ENCODE measurements at regions of chrX and their contacts with region 1.

Region 1: DNA sequence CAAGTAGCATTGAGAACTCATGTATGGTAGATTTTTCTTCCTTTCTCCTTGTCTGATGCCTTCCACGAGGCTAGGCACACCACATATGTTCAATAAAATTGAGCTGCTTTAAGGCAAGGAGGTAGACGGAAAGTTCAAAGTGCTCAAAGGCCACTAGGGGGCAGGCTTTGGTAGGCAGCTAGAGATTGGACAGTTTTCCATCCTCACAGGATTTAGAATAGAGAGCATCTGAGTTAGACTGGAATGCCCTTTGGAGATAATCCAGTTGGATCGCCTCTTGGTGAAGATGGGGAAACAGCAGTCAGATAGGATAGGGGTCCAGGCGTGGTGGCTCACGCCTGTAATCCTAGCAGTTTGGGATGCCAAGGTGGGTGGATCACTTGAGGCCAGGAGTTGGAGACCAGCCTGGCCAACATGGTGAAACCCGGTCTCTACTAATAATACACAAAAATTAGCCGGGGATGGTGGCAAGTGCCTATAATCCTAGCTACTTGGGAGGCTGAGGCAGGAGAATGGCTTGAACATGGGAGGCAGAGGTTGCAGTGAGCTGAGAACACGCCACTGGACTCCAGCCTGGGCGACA is 30.4 kb downstream of the ELF4 start:
- DNase-seq: peak; percentile 74
- H3K4me3 Mint-ChIP-seq: no peak overlapping the region
- H3K27ac Mint-ChIP-seq: peak overlapping the region; percentile 4
- H3K4me1 Mint-ChIP-seq: peaks cover 41% of the 10 kb centered on the region
- H3K27me3 Mint-ChIP-seq: no peaks in the 10 kb centered on the region

Region 2: GRCh38 chrX:129781134-129781672 is 298.7 kb before region 1 on chrX:
- CTCF ChIA-PET with region 1: no interaction called
- intact Hi-C with region 1: loop called (anchors 1 kb)
- DNase-seq: peak; percentile 91
- H3K4me3 Mint-ChIP-seq: peak overlapping the region; percentile 82
- H3K27ac Mint-ChIP-seq: peak overlapping the region; percentile 97
- H3K4me1 Mint-ChIP-seq: peaks cover 53% of the 10 kb centered on the region
- H3K27me3 Mint-ChIP-seq: no peaks in the 10 kb centered on the region

Region 3: DNA sequence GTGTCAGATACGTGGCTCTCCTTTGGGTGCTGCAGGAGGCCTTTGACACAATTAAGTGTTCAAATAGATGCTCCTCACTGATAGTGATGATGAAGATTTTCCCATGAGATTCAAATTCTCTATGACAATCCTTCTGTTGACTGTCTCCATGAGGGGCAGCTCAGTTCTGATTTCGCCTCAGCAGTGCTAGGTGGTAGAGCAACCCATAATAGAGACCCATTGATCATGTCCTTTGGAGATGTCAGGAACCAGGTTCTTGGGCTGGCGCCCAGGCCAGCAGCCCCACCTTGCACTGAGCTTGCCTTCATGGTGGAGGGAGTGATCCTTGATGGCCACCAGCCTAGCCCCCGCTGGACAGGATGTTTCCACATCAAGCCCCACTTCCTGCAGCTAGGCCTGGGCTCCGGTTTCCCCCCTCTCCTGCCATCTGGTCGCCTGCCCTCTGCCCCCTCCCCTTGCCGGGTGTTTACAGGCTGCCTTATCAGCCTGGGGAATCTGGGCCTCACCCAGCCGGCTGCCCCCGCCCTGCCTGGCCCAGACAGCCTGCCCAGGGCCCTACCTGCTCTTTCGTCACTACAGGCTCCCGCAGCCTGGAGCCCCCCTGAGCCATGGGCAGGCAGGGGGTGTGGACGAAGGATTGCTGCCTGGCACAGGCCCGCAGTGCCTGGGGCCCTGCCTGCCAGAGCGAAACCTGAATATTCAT is 17.7 kb after region 1 on chrX:
- CTCF ChIA-PET with region 1: interaction called, 12 read pairs
- intact Hi-C with region 1: loop called (anchors 1 kb)
- DNase-seq: peak; percentile 11
- H3K4me3 Mint-ChIP-seq: no peak overlapping the region
- H3K27ac Mint-ChIP-seq: peak overlapping the region; percentile 54
- H3K4me1 Mint-ChIP-seq: peaks cover 66% of the 10 kb centered on the region
- H3K27me3 Mint-ChIP-seq: no peaks in the 10 kb centered on the region

Region 4: DNA sequence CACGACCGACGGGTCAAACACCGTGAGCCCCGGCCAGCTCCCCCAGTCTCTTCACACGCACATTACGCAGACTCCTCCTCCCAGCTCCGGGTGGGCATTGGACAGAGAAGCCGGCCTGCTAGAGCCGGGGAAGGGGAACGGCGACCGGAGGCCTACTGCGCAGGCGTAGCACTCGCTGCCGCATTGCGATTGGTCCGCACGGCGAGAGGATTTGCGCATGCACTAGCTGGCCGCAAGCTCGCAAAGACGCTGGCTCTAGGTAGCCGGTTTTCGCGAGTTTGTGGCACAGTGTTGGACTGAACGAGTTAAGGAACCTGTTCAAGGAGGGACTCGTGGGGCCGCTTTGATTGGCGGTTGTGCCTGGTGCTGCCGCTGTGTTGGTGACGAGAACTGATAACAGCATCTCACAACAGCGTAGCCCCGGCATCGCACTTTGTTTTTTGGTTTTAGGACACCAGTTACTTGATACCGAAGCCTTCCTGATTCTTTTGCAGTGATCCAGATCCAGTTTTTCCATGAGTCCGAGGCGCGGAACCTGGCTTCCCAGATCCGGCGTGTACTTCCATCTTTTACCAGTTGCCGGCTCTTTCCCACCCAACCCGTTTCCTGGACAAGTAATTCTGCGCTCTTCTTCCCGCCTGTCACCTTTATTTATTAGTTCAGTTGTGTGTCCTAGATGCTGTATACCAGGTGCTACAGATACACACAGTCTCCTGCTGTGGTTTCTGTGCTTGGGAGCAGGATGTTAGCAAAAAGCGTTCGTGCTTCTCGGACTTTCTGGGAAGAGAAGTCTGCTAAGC is 86.0 kb after region 1 on chrX and contains the start of gene AIFM1:
- CTCF ChIA-PET with region 1: interaction called, 4 read pairs
- intact Hi-C with region 1: loop called (anchors 1 kb)
- DNase-seq: peak; percentile 90
- H3K4me3 Mint-ChIP-seq: peak within 1 kb of the TSS; percentile 93
- H3K27ac Mint-ChIP-seq: peak within 1 kb of the TSS; percentile 92
- H3K4me1 Mint-ChIP-seq: peaks cover 35% of the 10 kb centered on the region
- H3K27me3 Mint-ChIP-seq: no peaks in the 10 kb centered on the region
- total RNA-seq, gene AIFM1: 59.4 to 63.1 TPM

Region 5: DNA sequence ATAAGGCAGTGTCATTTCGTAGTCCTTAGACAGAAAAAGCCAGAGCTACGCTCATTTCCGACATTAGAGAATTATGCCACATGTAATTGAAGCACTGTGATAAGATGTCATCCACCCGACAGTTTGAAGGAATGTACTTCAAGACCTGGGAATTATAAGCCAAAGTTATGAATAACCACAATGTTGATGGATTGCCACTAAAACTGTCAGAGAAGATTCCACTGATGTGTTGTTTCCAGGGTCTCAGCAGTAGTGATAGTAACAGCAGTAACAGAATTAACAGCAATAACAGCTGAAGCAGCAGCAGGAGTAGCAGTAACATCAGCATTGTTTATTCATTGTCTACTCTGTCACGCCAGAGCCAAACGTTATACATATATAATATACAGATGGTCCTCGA is 116.6 kb after region 1 on chrX:
- CTCF ChIA-PET with region 1: interaction called, 99 read pairs
- intact Hi-C with region 1: loop called (anchors 1 kb)
- DNase-seq: no peak
- H3K4me3 Mint-ChIP-seq: no peak overlapping the region
- H3K27ac Mint-ChIP-seq: no peak overlapping the region
- H3K4me1 Mint-ChIP-seq: no peaks in the 10 kb centered on the region
- H3K27me3 Mint-ChIP-seq: no peaks in the 10 kb centered on the region

Region 6: DNA sequence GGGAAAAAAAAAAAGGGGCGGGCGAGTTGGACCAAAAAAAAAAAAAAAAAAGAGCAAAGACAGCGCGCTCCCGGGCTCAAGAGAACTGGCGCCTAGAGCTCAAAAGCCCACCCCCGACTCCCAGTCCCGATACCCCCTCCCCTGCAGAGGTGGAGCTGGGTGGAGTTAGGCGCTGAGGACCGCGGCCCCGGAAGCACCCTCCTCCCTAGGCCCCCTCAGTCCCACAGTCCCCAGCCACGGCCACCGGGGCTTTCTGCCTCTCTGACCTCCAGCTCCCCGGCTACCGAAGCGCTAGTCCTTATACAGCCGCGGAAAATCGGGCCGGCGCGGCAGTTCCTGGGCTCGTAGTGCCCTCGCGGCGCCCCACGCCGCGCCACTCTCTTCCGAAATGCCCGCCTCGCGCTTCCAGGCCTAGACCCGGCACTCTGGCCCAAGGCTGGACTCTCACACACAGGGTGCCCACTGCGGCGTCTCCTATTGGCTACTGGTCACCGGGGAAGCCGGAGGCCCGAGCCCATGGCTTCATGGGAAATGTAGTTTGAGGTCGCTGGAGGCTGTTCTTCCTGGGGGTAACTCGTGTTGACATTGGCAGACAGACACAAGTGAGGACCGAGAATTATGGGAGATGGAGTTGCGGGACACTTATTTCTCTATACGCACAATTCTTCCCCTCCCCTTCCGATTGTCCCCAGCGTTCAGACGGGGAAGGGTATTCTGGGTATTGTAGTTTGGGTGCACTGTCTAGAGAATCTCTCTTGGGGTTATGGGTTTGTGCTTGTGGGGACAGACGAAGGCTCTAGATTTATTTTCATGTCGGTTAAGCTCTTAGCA is 823.1 kb after region 1 on chrX and contains the start of gene ENOX2:
- CTCF ChIA-PET with region 1: no interaction called
- intact Hi-C with region 1: loop called (anchors 5 kb)
- DNase-seq: peak; percentile 84
- H3K4me3 Mint-ChIP-seq: no peak within 1 kb of the TSS
- H3K27ac Mint-ChIP-seq: no peak within 1 kb of the TSS
- H3K4me1 Mint-ChIP-seq: peaks cover 9% of the 10 kb centered on the region
- H3K27me3 Mint-ChIP-seq: no peaks in the 10 kb centered on the region
- total RNA-seq, gene ENOX2: 8.7 to 9.7 TPM